ENCODE measurements at regions of chr2 and their contacts with region 1.

Region 1: DNA sequence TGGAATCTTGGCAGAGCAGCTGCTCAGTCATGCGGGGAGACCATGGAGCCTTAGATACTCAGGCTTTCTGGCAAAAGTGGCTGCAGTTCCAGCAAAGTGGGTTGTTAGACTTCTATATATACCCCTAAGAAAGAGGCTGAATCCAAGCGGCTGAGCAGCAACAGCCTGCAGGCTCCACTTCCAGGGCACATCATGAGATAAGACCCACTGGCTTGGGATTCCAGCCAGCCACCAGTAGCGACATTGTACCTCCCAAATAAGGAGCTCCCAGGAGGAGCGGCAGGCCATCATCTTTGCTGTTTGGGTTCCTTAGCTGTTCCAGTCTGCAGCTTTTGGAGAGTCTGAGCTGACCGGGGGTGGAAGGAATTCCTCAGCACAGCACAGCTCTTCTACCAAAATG is 150.3 kb upstream of the ST6GAL2 start:
- DNase-seq: no peak
- H3K4me3 ChIP-seq: no peak overlapping the region
- H3K27ac ChIP-seq: no peak overlapping the region
- H3K4me1 ChIP-seq: no peaks in the 10 kb centered on the region
- H3K27me3 ChIP-seq: no peaks in the 10 kb centered on the region
- CTCF ChIP-seq: no peak

Region 2: DNA sequence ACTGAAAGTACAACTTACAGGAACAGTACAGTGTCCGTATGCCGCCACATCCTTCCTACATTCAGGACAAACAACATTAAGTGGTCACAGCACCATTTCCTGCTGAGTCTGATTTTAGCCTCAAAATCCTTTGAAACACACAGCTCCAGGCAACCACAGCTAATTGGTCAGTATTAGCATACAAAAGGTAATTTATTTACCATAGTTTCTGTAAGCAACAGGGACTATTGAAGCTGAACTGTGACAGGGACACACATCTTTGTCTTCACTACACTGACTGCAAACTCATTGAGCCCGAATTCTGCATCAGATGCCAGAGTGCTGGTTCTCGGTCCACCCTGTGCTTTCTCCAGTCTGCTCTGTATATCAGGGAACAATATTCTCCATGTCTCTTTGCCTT is 302.1 kb before region 1 on chr2:
- CTCF ChIA-PET with region 1: no interaction called
- dilution Hi-C with region 1: no loop called
- in situ Hi-C with region 1: no loop called
- intact Hi-C with region 1: no loop called
- DNase-seq: no peak
- H3K4me3 ChIP-seq: no peak overlapping the region
- H3K27ac ChIP-seq: no peak overlapping the region
- H3K4me1 ChIP-seq: no peaks in the 10 kb centered on the region
- H3K27me3 ChIP-seq: no peaks in the 10 kb centered on the region
- CTCF ChIP-seq: no peak

Region 3: DNA sequence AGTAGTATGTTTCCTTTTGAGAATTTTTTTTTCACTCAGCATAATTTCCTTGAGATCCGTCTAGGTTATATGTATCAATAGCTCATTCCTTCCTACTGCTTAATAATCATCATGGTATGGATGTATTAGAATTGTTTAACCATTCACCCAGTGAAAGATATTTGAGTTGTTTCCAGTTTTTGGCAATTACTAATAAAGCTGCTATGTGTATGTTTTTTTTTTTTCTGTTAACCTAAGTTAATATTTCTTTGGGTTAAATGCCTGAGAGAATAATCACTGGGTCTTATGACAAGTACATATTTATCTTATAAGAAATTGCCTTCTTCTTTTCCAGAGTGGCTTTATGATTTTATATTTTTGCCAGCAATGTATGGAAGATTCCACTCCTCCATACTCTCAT is 53.9 kb before region 1 on chr2:
- CTCF ChIA-PET with region 1: no interaction called
- dilution Hi-C with region 1: loop called (anchors 5 kb)
- in situ Hi-C with region 1: no loop called
- intact Hi-C with region 1: no loop called
- DNase-seq: no peak
- H3K4me3 ChIP-seq: no peak overlapping the region
- H3K27ac ChIP-seq: no peak overlapping the region
- H3K4me1 ChIP-seq: no peaks in the 10 kb centered on the region
- H3K27me3 ChIP-seq: no peaks in the 10 kb centered on the region
- CTCF ChIP-seq: no peak

Region 4: GRCh38 chr2:107197594-107198294 is 161.5 kb after region 1 on chr2:
- CTCF ChIA-PET with region 1: no interaction called
- dilution Hi-C with region 1: no loop called
- in situ Hi-C with region 1: no loop called
- intact Hi-C with region 1: no loop called
- DNase-seq: no peak
- H3K4me3 ChIP-seq: no peak overlapping the region
- H3K27ac ChIP-seq: no peak overlapping the region
- H3K4me1 ChIP-seq: no peaks in the 10 kb centered on the region
- H3K27me3 ChIP-seq: no peaks in the 10 kb centered on the region
- CTCF ChIP-seq: no peak

Measured in mammary epithelial cell (primary cell).